Sciatic nerve (tissue), 2 donors: ENCODE measurements at regions of chr5 and their contacts with region 1.

Region 1: DNA sequence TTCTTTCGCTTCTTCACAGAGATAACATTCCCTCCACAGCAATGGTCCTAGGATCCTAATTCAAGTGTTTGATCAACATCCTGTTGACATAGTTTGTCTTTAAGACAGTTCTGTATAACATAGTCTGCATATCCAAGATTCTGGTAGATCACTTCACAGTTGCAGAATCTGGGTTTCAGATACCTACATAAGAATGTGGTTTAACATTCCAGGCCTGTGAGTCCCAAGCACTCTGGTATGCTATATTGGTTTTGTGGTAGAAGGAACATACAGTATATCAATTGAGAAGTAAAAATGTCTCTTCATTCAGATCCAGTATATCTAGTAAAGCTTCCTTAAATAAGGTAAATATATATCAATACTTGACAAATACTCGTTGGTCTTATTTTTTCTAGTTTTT is 914.2 kb upstream of the CDH6 start:
- DNase-seq: no peak
- ATAC-seq: no peak

Region 2: GRCh38 chr5:30324083-30324482 is 44.8 kb after region 1 on chr5:
- intact Hi-C with region 1: loop called (anchors 2 kb)
- DNase-seq: no peak
- ATAC-seq: no peak